H1 (cell line): ENCODE measurements at regions of chr13 and their contacts with region 1.

Region 1: DNA sequence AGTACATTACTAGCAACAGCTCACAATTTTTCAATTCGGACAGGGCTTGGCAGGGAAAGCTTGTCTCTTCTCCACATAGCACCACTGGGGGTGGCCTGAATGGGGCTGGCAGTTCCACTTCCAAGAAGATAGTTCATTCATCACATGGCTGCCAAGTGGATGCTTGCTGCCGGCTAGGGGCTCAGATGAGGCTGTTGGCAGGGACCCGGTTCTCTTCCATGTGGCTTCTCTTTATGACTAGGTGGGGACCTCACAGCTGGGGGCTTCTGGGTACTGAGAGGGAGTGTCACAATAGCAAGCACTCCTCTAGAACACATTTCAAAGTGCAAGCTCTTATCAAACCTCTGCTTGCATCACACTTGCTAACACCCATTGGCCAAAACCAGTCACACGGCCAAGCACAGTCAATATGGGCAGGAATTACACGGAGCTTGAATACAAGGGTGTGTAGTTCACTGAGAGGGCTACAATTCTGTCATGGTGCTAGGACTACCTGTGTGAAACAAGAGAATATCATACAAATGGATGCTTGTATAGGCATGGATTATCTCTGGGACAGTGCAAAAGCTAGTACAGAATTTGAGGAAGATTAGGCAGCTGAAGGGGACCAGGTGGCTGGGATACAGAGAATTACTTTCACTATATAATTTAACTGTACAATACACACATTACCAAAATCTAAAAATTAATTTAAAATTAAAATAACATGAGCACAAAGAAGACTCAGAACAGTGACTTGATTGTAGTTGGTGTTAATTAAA is 32.3 kb downstream of the ATP7B start:
- DNase-seq: no peak
- H3K4me3 ChIP-seq: no peak overlapping the region
- H3K27ac ChIP-seq: no peak overlapping the region
- H3K4me1 ChIP-seq: peaks cover 0 to 4% (median 2%) of the 10 kb centered on the region in 4 experiments; a peak in 4 of 7 replicates
- H3K27me3 ChIP-seq: no peaks in the 10 kb centered on the region
- CTCF ChIP-seq: no peak
- EP300 ChIP-seq: no peak
- POLR2A ChIP-seq: no peak
- RAD21 ChIP-seq: no peak

Region 2: GRCh38 chr13:51959773-51960172 is 19.2 kb before region 1 on chr13:
- CTCF ChIA-PET with region 1: interaction called, 14 read pairs
- POLR2A ChIA-PET with region 1: no interaction called
- DNase-seq: no peak
- H3K4me3 ChIP-seq: no peak overlapping the region
- H3K27ac ChIP-seq: no peak overlapping the region
- H3K4me1 ChIP-seq: no peaks in the 10 kb centered on the region
- H3K27me3 ChIP-seq: no peaks in the 10 kb centered on the region
- CTCF ChIP-seq: no peak
- EP300 ChIP-seq: no peak
- POLR2A ChIP-seq: no peak
- RAD21 ChIP-seq: no peak

Region 3: GRCh38 chr13:51966186-51966585 is 12.8 kb before region 1 on chr13:
- CTCF ChIA-PET with region 1: interaction called, 14 read pairs
- POLR2A ChIA-PET with region 1: interaction called, 3 read pairs
- DNase-seq: no peak
- H3K4me3 ChIP-seq: no peak overlapping the region
- H3K27ac ChIP-seq: no peak overlapping the region
- H3K4me1 ChIP-seq: no peaks in the 10 kb centered on the region
- H3K27me3 ChIP-seq: no peaks in the 10 kb centered on the region
- CTCF ChIP-seq: no peak
- EP300 ChIP-seq: no peak
- POLR2A ChIP-seq: no peak
- RAD21 ChIP-seq: no peak